Pancreas (tissue), 10 donors: ENCODE measurements at regions of chr11 and their contacts with region 1.

Region 1: GRCh38 chr11:64545605-64546004 is 45.4 kb upstream of the SLC22A12 start:
- DNase-seq: peak in 1 of 6 donors; percentile 52
- ATAC-seq: no peak
- H3K4me3 ChIP-seq: no peak overlapping the region
- H3K27ac ChIP-seq: no peak overlapping the region
- H3K4me1 ChIP-seq: no peaks in the 10 kb centered on the region
- H3K27me3 ChIP-seq: no peaks in the 10 kb centered on the region
- CTCF ChIP-seq: no peak

Region 2: GRCh38 chr11:64372802-64373597 is 172.6 kb before region 1 on chr11:
- intact Hi-C with region 1: no loop called
- DNase-seq: peak in 2 of 6 donors; percentile 32 to 37
- ATAC-seq: peak; percentile 42 to 75 (median 44)
- H3K4me3 ChIP-seq: no peak overlapping the region
- H3K27ac ChIP-seq: no peak overlapping the region
- H3K4me1 ChIP-seq: peaks cover 0 to under 1% (median 0%) of the 10 kb centered on the region in 3 donors
- H3K27me3 ChIP-seq: no peaks in the 10 kb centered on the region
- CTCF ChIP-seq: no peak

Region 3: DNA sequence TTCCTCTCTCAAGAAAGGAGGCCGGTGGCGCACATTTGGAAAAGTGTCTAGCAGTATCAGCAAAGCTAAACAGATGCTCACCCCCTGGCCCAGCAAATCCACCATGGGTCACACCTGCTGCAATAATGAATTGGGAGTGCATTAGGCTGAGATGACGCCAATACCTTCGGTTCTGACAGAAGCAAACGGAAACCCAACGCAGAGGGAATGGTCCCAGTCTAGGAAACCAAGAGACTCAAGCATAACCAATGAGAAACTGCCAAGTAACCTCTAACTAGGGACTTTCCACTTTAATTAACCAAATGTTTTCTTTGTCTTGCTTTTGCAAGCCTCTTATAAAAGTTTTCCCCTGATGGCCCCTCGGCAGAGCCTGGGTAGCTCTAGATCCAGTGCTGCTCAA is 18.8 kb before region 1 on chr11:
- intact Hi-C with region 1: loop called in 1 of 3 experiments (anchors 2 kb)
- DNase-seq: no peak
- ATAC-seq: no peak
- H3K4me3 ChIP-seq: no peak overlapping the region
- H3K27ac ChIP-seq: no peak overlapping the region
- H3K4me1 ChIP-seq: no peaks in the 10 kb centered on the region
- H3K27me3 ChIP-seq: no peaks in the 10 kb centered on the region
- CTCF ChIP-seq: no peak

Region 4: DNA sequence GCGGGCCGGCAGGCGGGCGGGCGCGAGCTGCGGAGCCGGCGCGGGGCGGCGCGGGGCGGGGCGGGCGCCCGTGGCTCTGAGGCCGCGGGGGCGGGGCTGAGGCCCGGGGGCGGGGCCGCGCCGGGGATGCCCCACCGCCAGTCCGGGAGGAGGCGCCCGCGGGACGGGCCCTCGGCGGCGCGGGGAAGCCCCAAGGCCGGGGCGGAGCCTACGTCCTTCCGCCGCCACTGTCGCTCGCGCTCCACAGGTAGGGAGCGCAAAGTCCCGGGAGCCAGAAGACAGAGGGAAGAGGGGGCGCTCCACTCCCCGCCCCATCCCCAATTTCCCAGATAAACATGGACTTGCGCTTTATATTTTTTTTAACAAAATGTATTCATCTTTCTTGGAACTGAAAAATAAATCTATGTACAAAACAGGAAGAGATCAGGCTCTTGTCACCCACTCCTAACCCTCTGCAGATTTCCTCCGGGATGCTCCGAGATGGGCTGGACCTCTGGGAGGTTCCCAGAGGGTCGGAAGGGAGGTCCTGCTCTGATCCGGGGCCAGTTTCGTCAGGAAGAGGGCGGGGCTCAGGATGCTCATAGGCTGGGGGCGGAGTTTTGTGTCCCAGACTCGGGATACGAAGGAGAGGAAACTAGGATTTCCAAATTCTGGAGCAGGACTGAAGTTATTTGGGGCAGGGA is 257.7 kb after region 1 on chr11 and contains the start of gene MAP4K2:
- intact Hi-C with region 1: no loop called
- DNase-seq: peak; percentile 79 to 94 (median 88)
- ATAC-seq: peak; percentile 91 to 96 (median 94)
- H3K4me3 ChIP-seq: peak within 1 kb of the TSS; percentile 39 to 68 (median 52)
- H3K27ac ChIP-seq: peak within 1 kb of the TSS; percentile 41 to 60 (median 46)
- H3K4me1 ChIP-seq: peaks cover 6 to 12% (median 7%) of the 10 kb centered on the region in 3 donors
- H3K27me3 ChIP-seq: no peaks in the 10 kb centered on the region
- CTCF ChIP-seq: no peak
- total RNA-seq, gene MAP4K2: 6.1 to 8.6 (median 7.0) TPM